Posterior cingulate gyrus (tissue), 11 donors: ENCODE measurements at regions of chr6 and their contacts with region 1.

Region 1: DNA sequence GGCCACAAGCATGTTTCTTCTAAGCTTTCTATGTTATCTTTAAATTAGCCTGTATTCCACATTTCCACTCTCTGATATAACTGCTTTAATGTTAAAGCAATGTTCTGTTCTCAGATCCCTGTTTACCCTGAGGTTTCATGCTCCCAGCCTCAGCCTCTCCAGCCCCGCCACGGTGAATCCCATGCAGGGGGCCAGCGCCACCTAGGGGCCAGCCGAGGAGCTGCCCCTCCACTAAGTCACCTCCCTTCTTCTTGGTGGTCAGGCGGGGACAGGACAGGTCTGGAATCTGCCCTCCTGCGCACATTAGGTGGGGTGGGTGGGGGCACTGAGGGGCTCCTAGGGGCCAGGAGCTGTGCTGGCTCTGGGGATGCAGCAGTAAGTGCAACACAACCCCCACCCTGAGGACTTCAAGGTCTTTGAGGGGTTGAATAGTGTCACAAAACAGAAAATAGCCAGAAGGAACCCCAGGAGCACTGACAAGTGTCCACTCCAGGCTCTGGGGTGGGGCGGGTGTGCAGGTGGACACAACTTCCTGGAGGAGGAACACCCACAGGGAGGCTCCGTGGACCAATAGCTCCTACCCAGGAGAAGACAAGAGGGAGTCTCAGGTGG is 61.6 kb downstream of the RAB44 start:
- DNase-seq: peak; percentile 74 to 98 (median 86)

Region 2: GRCh38 chr6:36623547-36624459 is 135.5 kb before region 1 on chr6:
- intact Hi-C with region 1: loop called (anchors 2 kb)
- DNase-seq: peak; percentile 45 to 96 (median 82)

Region 3: GRCh38 chr6:36685936-36686667 is 73.2 kb before region 1 on chr6:
- intact Hi-C with region 1: loop called (anchors 5 kb)
- DNase-seq: peak in 1 of 10 donors; percentile 57

Region 4: GRCh38 chr6:36862164-36862847 is 103.1 kb after region 1 on chr6:
- intact Hi-C with region 1: no loop called
- DNase-seq: no peak